ENCODE measurements at regions of chr11 and their contacts with region 1.

Region 1: GRCh38 chr11:4060182-4060923 is 34.2 kb upstream of the RRM1 start:
- DNase-seq: no peak
- ATAC-seq: no peak
- H3K4me3 Mint-ChIP-seq: no peak overlapping the region
- H3K27ac Mint-ChIP-seq: no peak overlapping the region
- H3K4me1 Mint-ChIP-seq: peaks cover 37% of the 10 kb centered on the region
- H3K27me3 Mint-ChIP-seq: no peaks in the 10 kb centered on the region

Region 2: DNA sequence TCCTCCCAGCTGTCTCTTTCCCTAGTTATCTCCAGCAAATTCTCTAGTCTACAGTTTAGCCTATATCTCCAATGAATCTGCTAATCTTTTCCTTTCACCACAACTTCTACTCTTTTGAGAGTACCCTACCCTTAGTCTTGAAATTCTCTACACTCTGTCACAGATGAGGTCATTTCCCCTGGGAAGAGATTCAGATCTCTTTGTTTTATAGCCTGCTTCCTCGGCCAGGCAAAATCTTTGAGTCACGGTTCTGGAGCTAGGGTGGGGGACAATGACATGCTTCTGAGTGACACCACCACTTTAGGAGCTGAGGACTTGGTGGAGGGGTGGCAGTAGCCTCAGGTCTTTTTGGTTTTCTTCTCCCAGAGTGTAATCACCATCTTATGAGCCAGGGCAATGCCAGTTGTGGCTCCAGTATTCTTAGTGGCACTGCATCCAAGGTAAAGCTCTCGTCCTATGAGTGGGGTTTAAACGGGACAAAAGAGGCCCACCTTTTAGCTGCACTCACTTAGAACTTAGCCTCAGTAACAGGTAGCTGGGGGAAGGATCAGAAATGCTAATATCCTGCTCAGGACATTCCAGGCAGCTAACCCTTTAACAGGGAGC is 64.3 kb before region 1 on chr11:
- CTCF ChIA-PET with region 1: no interaction called
- POLR2A ChIA-PET with region 1: no interaction called
- intact Hi-C with region 1: loop called in 1 of 2 experiments (anchors 5 kb)
- DNase-seq: no peak
- ATAC-seq: no peak
- H3K4me3 Mint-ChIP-seq: no peak overlapping the region
- H3K27ac Mint-ChIP-seq: no peak overlapping the region
- H3K4me1 Mint-ChIP-seq: peaks cover 33% of the 10 kb centered on the region
- H3K27me3 Mint-ChIP-seq: no peaks in the 10 kb centered on the region

Region 3: DNA sequence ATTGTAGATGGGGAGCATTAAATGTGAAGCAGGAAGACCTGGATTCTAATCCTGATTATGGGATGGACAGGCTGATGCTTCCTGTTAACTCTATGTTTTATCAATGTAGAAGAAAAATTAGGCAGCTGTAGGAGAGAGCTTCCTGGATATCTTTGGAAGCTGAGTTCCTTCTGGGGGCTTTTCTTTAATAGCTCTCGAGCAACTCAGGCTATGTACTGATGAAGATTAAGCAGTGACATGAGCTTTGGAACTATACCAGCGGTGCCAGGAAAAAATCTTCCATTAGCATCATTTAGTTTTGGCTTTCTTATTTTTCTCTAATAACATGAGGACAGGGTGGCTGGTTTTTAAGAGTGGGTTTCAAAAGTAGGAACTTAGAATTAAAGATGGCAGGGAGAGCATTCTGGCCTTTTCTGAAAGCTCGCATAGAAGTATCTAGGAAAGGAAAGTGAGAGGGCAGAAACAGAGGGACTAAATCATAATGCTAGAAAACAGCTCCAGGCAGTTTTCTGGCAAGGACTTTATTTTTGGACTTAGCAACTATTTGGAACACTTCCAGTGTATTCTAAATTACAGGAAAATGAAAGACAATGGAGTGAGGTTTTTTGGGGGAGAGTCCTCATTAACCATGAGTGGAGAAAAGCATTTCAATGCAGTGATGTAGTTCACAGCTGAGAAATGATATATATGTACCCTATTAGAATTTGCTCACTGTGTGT is 34.9 kb before region 1 on chr11:
- CTCF ChIA-PET with region 1: no interaction called
- POLR2A ChIA-PET with region 1: no interaction called
- intact Hi-C with region 1: no loop called
- DNase-seq: no peak
- ATAC-seq: no peak
- H3K4me3 Mint-ChIP-seq: no peak overlapping the region
- H3K27ac Mint-ChIP-seq: no peak overlapping the region
- H3K4me1 Mint-ChIP-seq: peaks cover 9% of the 10 kb centered on the region
- H3K27me3 Mint-ChIP-seq: no peaks in the 10 kb centered on the region

Region 4: GRCh38 chr11:4105916-4106315 is 45.6 kb after region 1 on chr11:
- CTCF ChIA-PET with region 1: no interaction called
- POLR2A ChIA-PET with region 1: no interaction called
- intact Hi-C with region 1: no loop called
- DNase-seq: no peak
- ATAC-seq: no peak
- H3K4me3 Mint-ChIP-seq: no peak overlapping the region
- H3K27ac Mint-ChIP-seq: no peak overlapping the region
- H3K4me1 Mint-ChIP-seq: peaks cover 14% of the 10 kb centered on the region
- H3K27me3 Mint-ChIP-seq: no peaks in the 10 kb centered on the region

Measured in activated CD4-positive, alpha-beta T cell treated with anti-CD3 and anti-CD28 coated beads for 36 hours (primary cell).